PC-9 (cell line): ENCODE measurements at regions of chr15 and their contacts with region 1.

Region 1: GRCh38 chr15:66765478-66766281 is 63.6 kb downstream of the SMAD6 start:
- DNase-seq: peak; percentile 95 to 97
- H3K4me3 ChIP-seq: 0 out of 2 replicates have a peak overlapping the region, but pooled peaks have one; percentile 8
- H3K27ac ChIP-seq: peak overlapping the region; percentile 71
- H3K4me1 ChIP-seq: peaks cover 83% of the 10 kb centered on the region
- H3K27me3 ChIP-seq: no peaks in the 10 kb centered on the region
- CTCF ChIP-seq: no peak

Region 2: GRCh38 chr15:65364838-65365628 is 1400.6 kb before region 1 on chr15:
- CTCF ChIA-PET with region 1: no interaction called
- POLR2A ChIA-PET with region 1: interaction called, 14 read pairs
- intact Hi-C with region 1: no loop called
- DNase-seq: peak; percentile 63 to 77
- H3K4me3 ChIP-seq: peak overlapping the region; percentile 28; the same call in 1 of the 2 replicates
- H3K27ac ChIP-seq: peak overlapping the region; percentile 46
- H3K4me1 ChIP-seq: peaks cover 49% of the 10 kb centered on the region
- H3K27me3 ChIP-seq: no peaks in the 10 kb centered on the region
- CTCF ChIP-seq: no peak

Region 3: GRCh38 chr15:66504563-66505429 is 260.9 kb before region 1 on chr15 and contains the starts of genes RPL4 and ZWILCH:
- CTCF ChIA-PET with region 1: no interaction called
- POLR2A ChIA-PET with region 1: no interaction called
- intact Hi-C with region 1: loop called (anchors 5 kb)
- DNase-seq: peak; percentile 59 to 84
- H3K4me3 ChIP-seq: peak within 1 kb of the TSS; percentile 100
- H3K27ac ChIP-seq: peak within 1 kb of the TSS; percentile 91
- H3K4me1 ChIP-seq: peaks cover 11% of the 10 kb centered on the region
- H3K27me3 ChIP-seq: no peaks in the 10 kb centered on the region
- CTCF ChIP-seq: no peak
- total RNA-seq, gene RPL4: 1,859 and 2,320 TPM in 2 replicates
- total RNA-seq, gene ZWILCH: 26.3 and 30.3 TPM in 2 replicates

Region 4: GRCh38 chr15:66633041-66633937 is 132.4 kb before region 1 on chr15:
- CTCF ChIA-PET with region 1: no interaction called
- POLR2A ChIA-PET with region 1: interaction called, 17 read pairs
- intact Hi-C with region 1: no loop called
- DNase-seq: no peak
- H3K4me3 ChIP-seq: no peak overlapping the region
- H3K27ac ChIP-seq: no peak overlapping the region
- H3K4me1 ChIP-seq: no peaks in the 10 kb centered on the region
- H3K27me3 ChIP-seq: no peaks in the 10 kb centered on the region
- CTCF ChIP-seq: no peak

Region 5: GRCh38 chr15:66751541-66751952 is 14.1 kb before region 1 on chr15:
- CTCF ChIA-PET with region 1: no interaction called
- POLR2A ChIA-PET with region 1: interaction called, 6 read pairs
- intact Hi-C with region 1: loop called (anchors 2 kb)
- DNase-seq: peak; percentile 66 to 80
- H3K4me3 ChIP-seq: no peak overlapping the region
- H3K27ac ChIP-seq: peak overlapping the region; percentile 47; the same call in 1 of the 2 replicates
- H3K4me1 ChIP-seq: peaks cover 58% of the 10 kb centered on the region
- H3K27me3 ChIP-seq: no peaks in the 10 kb centered on the region
- CTCF ChIP-seq: no peak

Region 6: GRCh38 chr15:66789029-66790025 is 23.6 kb after region 1 on chr15:
- CTCF ChIA-PET with region 1: interaction called, 11 read pairs
- POLR2A ChIA-PET with region 1: no interaction called
- intact Hi-C with region 1: no loop called
- DNase-seq: no peak
- H3K4me3 ChIP-seq: no peak overlapping the region
- H3K27ac ChIP-seq: no peak overlapping the region
- H3K4me1 ChIP-seq: no peaks in the 10 kb centered on the region
- H3K27me3 ChIP-seq: no peaks in the 10 kb centered on the region
- CTCF ChIP-seq: peak; percentile 59

Region 7: DNA sequence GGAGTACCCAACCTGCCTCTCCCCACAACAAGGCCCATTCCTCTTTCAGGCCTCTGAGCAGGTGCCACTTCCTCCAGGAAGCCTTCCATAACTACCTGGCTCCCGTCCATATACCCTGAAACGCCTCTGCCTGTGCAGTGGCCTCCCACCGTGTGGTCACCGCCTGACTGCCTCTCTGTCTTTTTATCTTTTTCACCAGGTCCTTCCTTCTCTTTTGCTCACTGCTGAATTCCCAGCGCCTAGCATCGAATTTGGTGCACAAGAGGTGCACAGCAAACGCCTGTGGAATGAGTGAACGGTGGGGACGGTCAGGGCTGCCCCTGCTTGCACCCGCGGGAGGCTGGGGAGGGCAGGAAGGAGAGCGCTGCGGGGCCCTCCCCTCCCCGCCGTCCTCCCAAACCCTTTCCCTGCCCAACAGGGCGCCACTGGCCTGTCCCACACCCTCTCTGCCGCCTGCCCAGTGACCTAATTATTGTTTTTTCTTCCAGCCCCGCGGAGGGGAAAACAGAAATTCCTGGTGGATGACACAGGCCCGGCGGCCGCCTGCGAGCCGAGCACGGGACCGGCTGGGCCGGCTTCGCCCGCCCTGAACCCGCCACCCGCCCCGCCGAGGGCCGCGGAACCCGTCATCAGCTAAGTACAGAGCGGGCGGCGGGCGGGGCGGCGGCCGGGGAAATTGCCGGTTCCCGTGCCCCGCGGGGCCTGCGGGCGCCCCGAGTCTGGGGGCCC is 76.4 kb after region 1 on chr15:
- CTCF ChIA-PET with region 1: interaction called, 19 read pairs
- POLR2A ChIA-PET with region 1: interaction called, 3 read pairs
- intact Hi-C with region 1: no loop called
- DNase-seq: peak; percentile 77 to 92
- H3K4me3 ChIP-seq: peak overlapping the region; percentile 46; the same call in 1 of the 2 replicates
- H3K27ac ChIP-seq: peak overlapping the region; percentile 81
- H3K4me1 ChIP-seq: peaks cover 29% of the 10 kb centered on the region
- H3K27me3 ChIP-seq: no peaks in the 10 kb centered on the region
- CTCF ChIP-seq: no peak